A673 (cell line): ENCODE measurements at regions of chr6 and their contacts with region 1.

Region 1: DNA sequence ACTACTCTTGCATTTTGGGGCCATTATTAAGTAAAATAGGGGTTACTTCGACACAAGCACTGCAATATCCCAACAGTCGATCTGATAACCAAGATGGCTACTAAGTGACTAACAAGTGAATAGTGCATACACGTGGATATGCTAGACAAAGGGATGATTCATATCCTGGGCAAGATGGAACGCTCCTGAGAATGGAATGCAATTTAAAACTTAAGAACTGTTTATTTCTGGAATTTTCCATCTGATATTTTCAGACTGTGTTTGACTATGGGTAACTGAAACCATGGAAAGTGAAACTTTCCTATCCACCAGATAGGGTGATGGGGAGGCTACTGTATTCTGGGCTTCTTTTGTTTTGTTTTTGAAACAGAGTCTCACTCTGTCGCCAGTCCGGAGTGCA is 66.5 kb downstream of the ILRUN start:
- DNase-seq: peak; percentile 35
- H3K4me3 ChIP-seq: no peak overlapping the region
- H3K27ac ChIP-seq: no peak overlapping the region
- H3K4me1 ChIP-seq: no peaks in the 10 kb centered on the region
- H3K27me3 ChIP-seq: no peaks in the 10 kb centered on the region
- CTCF ChIP-seq: no peak

Region 2: DNA sequence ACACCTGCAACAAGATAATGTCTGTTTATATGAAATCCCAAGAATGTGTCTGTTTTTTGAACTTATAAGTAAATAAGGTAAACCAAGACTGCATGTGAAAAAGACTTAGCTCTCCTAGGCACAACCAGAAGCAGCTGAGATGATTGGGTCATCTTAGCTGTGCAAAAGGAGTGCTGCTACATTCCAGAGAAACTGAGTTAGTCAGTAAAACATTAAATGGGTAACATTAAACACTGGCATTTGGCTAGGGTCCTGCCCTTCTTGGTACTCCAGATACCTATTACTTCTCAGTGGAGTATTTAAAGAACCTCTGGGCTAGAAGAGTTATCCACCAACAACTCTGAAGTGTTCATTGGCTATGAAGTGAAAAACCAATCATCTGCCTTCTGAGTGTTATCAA is 18.8 kb after region 1 on chr6:
- CTCF ChIA-PET with region 1: interaction called, 12 read pairs
- POLR2A ChIA-PET with region 1: no interaction called
- intact Hi-C with region 1: no loop called
- DNase-seq: no peak
- H3K4me3 ChIP-seq: no peak overlapping the region
- H3K27ac ChIP-seq: no peak overlapping the region
- H3K4me1 ChIP-seq: no peaks in the 10 kb centered on the region
- H3K27me3 ChIP-seq: no peaks in the 10 kb centered on the region
- CTCF ChIP-seq: no peak

Region 3: DNA sequence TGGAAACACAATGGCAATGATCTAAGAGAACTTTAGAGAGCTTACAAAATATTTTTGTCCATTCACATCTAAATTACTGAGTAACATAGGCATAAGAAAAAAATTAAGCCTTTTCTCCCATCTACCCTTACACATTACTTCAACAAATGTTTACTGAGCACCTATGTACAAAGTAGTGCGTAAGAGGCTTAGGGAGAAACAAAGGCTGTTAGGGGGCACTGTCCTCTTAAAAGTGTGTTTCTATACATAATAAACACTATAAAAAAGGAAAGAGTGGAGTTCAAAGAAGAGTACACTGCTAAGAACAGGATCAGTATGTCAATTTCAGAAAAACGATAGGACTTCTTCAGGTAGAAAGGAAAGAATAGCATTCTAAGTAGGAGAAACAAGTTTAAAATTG is 54.3 kb after region 1 on chr6:
- CTCF ChIA-PET with region 1: no interaction called
- POLR2A ChIA-PET with region 1: interaction called, 11 read pairs
- intact Hi-C with region 1: no loop called
- DNase-seq: no peak
- H3K4me3 ChIP-seq: no peak overlapping the region
- H3K27ac ChIP-seq: no peak overlapping the region
- H3K4me1 ChIP-seq: peaks cover 4% of the 10 kb centered on the region
- H3K27me3 ChIP-seq: no peaks in the 10 kb centered on the region
- CTCF ChIP-seq: no peak

Region 4: GRCh38 chr6:34696739-34697543 is 66.9 kb after region 1 on chr6 and contains the start of gene ILRUN:
- CTCF ChIA-PET with region 1: no interaction called
- POLR2A ChIA-PET with region 1: interaction called, 21 read pairs
- intact Hi-C with region 1: no loop called
- DNase-seq: peak; percentile 96
- H3K4me3 ChIP-seq: peak within 1 kb of the TSS; percentile 97
- H3K27ac ChIP-seq: peak within 1 kb of the TSS; percentile 86
- H3K4me1 ChIP-seq: peaks cover 7% of the 10 kb centered on the region
- H3K27me3 ChIP-seq: no peaks in the 10 kb centered on the region
- CTCF ChIP-seq: no peak
- total RNA-seq, gene ILRUN: 58.4 and 66.5 TPM in 2 replicates